Calu3 (cell line): ENCODE measurements at regions of chr4 and their contacts with region 1.

Region 1: DNA sequence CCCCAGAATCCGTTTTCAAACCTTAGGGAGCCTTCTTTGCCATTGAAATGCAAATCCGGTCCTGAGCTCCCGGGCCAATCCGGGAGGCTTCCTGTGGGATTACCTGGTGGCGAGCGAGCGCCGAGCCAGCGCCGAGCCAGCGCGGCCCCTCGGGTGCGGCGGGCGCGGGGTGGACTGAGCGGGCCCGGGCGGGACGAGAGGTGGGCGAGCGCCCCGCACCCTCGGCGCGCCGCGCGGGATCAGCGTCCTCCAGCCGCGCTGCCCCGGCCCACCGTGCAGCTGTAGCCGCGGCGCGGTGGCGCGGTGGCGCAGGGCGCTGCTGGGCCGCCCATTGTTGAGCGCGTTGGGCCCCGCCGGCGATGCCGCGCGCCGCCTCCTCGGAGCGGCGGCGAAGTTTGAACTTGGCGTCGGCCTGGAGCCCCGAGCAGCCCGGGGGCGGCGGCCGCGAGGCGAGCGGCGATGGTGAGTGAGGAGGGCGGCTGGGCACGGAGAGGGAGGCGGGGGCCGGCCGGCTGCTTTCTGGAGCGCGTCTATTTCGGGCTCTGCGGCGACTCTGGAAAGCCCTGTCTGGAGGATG is 208.6 kb downstream of the SOWAHB start:
- DNase-seq: peak; percentile 33
- H3K4me3 Mint-ChIP-seq: peak overlapping the region; percentile 89
- H3K27ac Mint-ChIP-seq: peak overlapping the region; percentile 93
- H3K4me1 Mint-ChIP-seq: peaks cover 42% of the 10 kb centered on the region
- H3K27me3 Mint-ChIP-seq: no peaks in the 10 kb centered on the region
- CTCF ChIP-seq: no peak

Region 2: DNA sequence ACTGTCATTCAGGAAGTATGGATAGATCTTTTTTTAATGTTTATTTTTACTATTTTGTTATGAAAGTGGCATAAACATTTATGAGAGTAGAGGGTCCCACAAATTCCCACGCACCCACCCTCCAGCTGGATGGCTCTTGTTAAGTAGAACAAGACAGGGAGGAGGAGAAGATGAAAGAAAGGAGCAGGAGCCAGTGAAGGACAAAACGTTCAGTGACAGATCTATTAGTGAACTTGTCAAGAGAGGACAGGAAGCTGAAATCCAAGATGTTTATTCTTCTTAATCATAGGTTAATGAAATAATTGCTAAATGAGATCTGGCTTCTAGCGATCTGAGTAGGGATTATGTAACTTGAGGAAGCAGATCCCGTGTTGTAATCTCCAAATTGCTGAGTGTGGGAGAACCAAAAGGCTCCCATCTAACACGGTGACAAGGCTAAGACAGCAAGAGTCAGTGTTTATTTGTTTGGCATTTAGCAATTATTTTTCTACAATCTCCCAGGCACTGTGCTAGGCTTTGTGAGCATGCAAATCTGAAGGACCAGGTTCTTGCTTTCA is 91.8 kb before region 1 on chr4:
- CTCF ChIA-PET with region 1: no interaction called
- intact Hi-C with region 1: loop called (anchors 5 kb)
- DNase-seq: no peak
- H3K4me3 Mint-ChIP-seq: peak overlapping the region; percentile 58
- H3K27ac Mint-ChIP-seq: peak overlapping the region; percentile 90
- H3K4me1 Mint-ChIP-seq: peaks cover 57% of the 10 kb centered on the region
- H3K27me3 Mint-ChIP-seq: no peaks in the 10 kb centered on the region
- CTCF ChIP-seq: no peak

Region 3: GRCh38 chr4:76624241-76624681 is 65.1 kb before region 1 on chr4:
- CTCF ChIA-PET with region 1: no interaction called
- intact Hi-C with region 1: loop called (anchors 5 kb)
- DNase-seq: peak; percentile 15
- H3K4me3 Mint-ChIP-seq: peak overlapping the region; percentile 46
- H3K27ac Mint-ChIP-seq: peak overlapping the region; percentile 72
- H3K4me1 Mint-ChIP-seq: peaks cover 75% of the 10 kb centered on the region
- H3K27me3 Mint-ChIP-seq: no peaks in the 10 kb centered on the region
- CTCF ChIP-seq: no peak

Region 4: GRCh38 chr4:76811604-76812412 is 122.5 kb after region 1 on chr4:
- CTCF ChIA-PET with region 1: no interaction called
- intact Hi-C with region 1: no loop called
- DNase-seq: no peak
- H3K4me3 Mint-ChIP-seq: no peak overlapping the region
- H3K27ac Mint-ChIP-seq: no peak overlapping the region
- H3K4me1 Mint-ChIP-seq: no peaks in the 10 kb centered on the region
- H3K27me3 Mint-ChIP-seq: no peaks in the 10 kb centered on the region
- CTCF ChIP-seq: no peak